ENCODE measurements at regions of chr5 and their contacts with region 1.

Region 1: GRCh38 chr5:180950291-180950949 is 38.2 kb upstream of the BTNL3 start:
- DNase-seq: no peak
- H3K4me3 ChIP-seq: no peak overlapping the region
- H3K27ac ChIP-seq: no peak overlapping the region
- H3K4me1 ChIP-seq: peaks cover 0 to 9% (median 4%) of the 10 kb centered on the region in 4 donors
- H3K27me3 ChIP-seq: no peaks in the 10 kb centered on the region
- CTCF ChIP-seq: no peak
- EP300 ChIP-seq: no peak
- POLR2A ChIP-seq: no peak

Region 2: GRCh38 chr5:180860887-180861822 is 89.3 kb before region 1 on chr5 and contains the start of gene ZFP62:
- intact Hi-C with region 1: no loop called
- DNase-seq: peak; percentile 93 to 97
- H3K4me3 ChIP-seq: peak within 1 kb of the TSS; percentile 78 to 93 (median 89)
- H3K27ac ChIP-seq: peak within 1 kb of the TSS; percentile 90 to 97 (median 94)
- H3K4me1 ChIP-seq: peaks cover 8 to 23% (median 15%) of the 10 kb centered on the region in 4 donors
- H3K27me3 ChIP-seq: no peaks in the 10 kb centered on the region
- CTCF ChIP-seq: peak in 2 of 7 experiments; percentile 8 to 26
- EP300 ChIP-seq: no peak
- POLR2A ChIP-seq: no peak
- total RNA-seq, gene ZFP62: 8.2 to 46.9 (median 16.5) TPM

Region 3: GRCh38 chr5:181005791-181006190 is 55.4 kb after region 1 on chr5:
- intact Hi-C with region 1: loop called (anchors 5 kb)
- DNase-seq: no peak
- H3K4me3 ChIP-seq: no peak overlapping the region
- H3K27ac ChIP-seq: no peak overlapping the region
- H3K4me1 ChIP-seq: no peaks in the 10 kb centered on the region
- H3K27me3 ChIP-seq: peaks cover 0 to 16% (median 0%) of the 10 kb centered on the region in 3 donors
- CTCF ChIP-seq: no peak
- EP300 ChIP-seq: no peak
- POLR2A ChIP-seq: no peak

Measured in stomach (tissue), 19 donors.